Activated naive CD4-positive, alpha-beta T cell treated with anti-CD3 and anti-CD28 coated beads for 36 hours (primary cell): ENCODE measurements at regions of chr2 and their contacts with region 1.

Region 1: GRCh38 chr2:47336259-47337238 is 66.4 kb upstream of the MSH2 start:
- DNase-seq: no peak
- H3K4me3 Mint-ChIP-seq: no peak overlapping the region
- H3K27ac Mint-ChIP-seq: no peak overlapping the region
- H3K4me1 Mint-ChIP-seq: no peaks in the 10 kb centered on the region
- H3K27me3 Mint-ChIP-seq: peaks cover 3% of the 10 kb centered on the region

Region 2: GRCh38 chr2:47386551-47386950 is 50.0 kb after region 1 on chr2:
- CTCF ChIA-PET with region 1: interaction called, 65 read pairs
- intact Hi-C with region 1: loop called (anchors 1 kb)
- DNase-seq: no peak
- H3K4me3 Mint-ChIP-seq: no peak overlapping the region
- H3K27ac Mint-ChIP-seq: no peak overlapping the region
- H3K4me1 Mint-ChIP-seq: no peaks in the 10 kb centered on the region
- H3K27me3 Mint-ChIP-seq: peaks cover 3% of the 10 kb centered on the region

Region 3: GRCh38 chr2:47724221-47724981 is 387.9 kb after region 1 on chr2:
- CTCF ChIA-PET with region 1: no interaction called
- intact Hi-C with region 1: no loop called
- DNase-seq: no peak
- H3K4me3 Mint-ChIP-seq: no peak overlapping the region
- H3K27ac Mint-ChIP-seq: no peak overlapping the region
- H3K4me1 Mint-ChIP-seq: no peaks in the 10 kb centered on the region
- H3K27me3 Mint-ChIP-seq: no peaks in the 10 kb centered on the region

Region 4: DNA sequence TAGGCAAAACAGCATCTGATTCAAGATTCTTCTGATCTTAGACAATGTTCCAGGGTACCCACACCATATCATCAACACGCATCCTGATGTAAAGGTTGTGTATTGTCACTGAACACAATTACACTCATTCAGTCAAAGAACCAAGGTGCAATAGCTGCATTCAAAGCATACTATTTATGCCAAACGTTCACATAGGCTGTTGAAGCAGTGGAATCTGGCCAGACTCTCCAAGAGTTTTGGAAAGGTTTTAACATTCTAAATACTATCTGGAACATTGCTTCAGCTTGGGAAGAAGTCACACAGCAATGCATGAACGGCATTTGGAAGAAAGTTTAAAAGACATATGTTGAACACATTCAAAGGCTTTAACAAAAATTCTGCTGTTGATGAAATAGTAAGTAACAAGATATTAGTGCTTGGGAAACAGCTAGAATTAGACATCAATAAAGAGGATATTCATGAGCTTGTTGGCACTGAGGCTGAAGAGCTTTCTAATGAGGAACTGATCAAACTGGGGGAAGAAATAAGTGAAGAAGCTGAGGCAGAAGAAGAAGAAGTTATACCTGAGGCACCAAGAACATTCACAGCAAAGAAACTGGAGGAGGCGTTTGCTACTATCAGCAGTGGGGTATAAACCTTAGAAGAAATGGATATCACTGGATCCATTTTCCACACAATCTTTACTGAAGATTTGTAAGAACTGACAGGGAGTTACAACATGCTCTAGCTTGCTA is 398.8 kb after region 1 on chr2:
- CTCF ChIA-PET with region 1: no interaction called
- intact Hi-C with region 1: no loop called
- DNase-seq: no peak
- H3K4me3 Mint-ChIP-seq: no peak overlapping the region
- H3K27ac Mint-ChIP-seq: no peak overlapping the region
- H3K4me1 Mint-ChIP-seq: no peaks in the 10 kb centered on the region
- H3K27me3 Mint-ChIP-seq: no peaks in the 10 kb centered on the region

Region 5: GRCh38 chr2:48200620-48201293 is 864.2 kb after region 1 on chr2:
- CTCF ChIA-PET with region 1: no interaction called
- intact Hi-C with region 1: no loop called
- DNase-seq: no peak
- H3K4me3 Mint-ChIP-seq: no peak overlapping the region
- H3K27ac Mint-ChIP-seq: no peak overlapping the region
- H3K4me1 Mint-ChIP-seq: peaks cover 6% of the 10 kb centered on the region
- H3K27me3 Mint-ChIP-seq: no peaks in the 10 kb centered on the region